CD4-positive, alpha-beta T cell (primary cell): ENCODE measurements at regions of chr5 and their contacts with region 1.

Region 1: GRCh38 chr5:154430466-154430865 is 15.3 kb upstream of the SAP30L start:
- DNase-seq: no peak
- ATAC-seq: no peak
- H3K4me3 ChIP-seq: no peak overlapping the region
- H3K4me3 Mint-ChIP-seq: no peak overlapping the region
- H3K27ac ChIP-seq: no peak overlapping the region
- H3K27ac Mint-ChIP-seq: no peak overlapping the region
- H3K4me1 ChIP-seq: no peaks in the 10 kb centered on the region
- H3K4me1 Mint-ChIP-seq: no peaks in the 10 kb centered on the region
- H3K27me3 ChIP-seq: no peaks in the 10 kb centered on the region
- H3K27me3 Mint-ChIP-seq: no peaks in the 10 kb centered on the region
- CTCF ChIP-seq: no peak

Region 2: DNA sequence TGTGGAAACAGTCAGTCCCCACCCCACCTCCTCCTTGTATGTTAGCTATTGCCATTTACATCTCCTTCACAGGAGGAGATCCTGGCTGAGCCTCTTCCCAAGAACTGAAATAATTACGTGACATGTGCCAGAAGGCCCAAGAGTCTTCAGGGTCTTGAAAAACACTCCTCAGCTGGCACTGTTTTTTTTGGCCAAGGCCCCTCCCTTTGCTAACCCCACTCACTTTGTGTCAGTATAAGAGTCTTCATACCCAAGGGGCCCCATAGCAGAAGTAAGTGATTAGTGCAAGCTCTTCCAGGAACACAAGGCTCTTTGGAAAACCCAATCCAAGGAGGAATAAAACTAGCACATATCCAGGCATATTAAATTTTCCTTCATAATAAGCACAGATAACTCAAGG is 319.0 kb after region 1 on chr5:
- CTCF ChIA-PET with region 1: no interaction called
- POLR2A ChIA-PET with region 1: no interaction called
- intact Hi-C with region 1: loop called in 1 of 2 experiments (anchors 5 kb)
- DNase-seq: no peak
- ATAC-seq: no peak
- H3K4me3 ChIP-seq: no peak overlapping the region
- H3K4me3 Mint-ChIP-seq: no peak overlapping the region
- H3K27ac ChIP-seq: no peak overlapping the region
- H3K27ac Mint-ChIP-seq: no peak overlapping the region
- H3K4me1 ChIP-seq: peaks cover 11% of the 10 kb centered on the region
- H3K4me1 Mint-ChIP-seq: peaks cover 14% of the 10 kb centered on the region
- H3K27me3 ChIP-seq: no peaks in the 10 kb centered on the region
- H3K27me3 Mint-ChIP-seq: no peaks in the 10 kb centered on the region
- CTCF ChIP-seq: no peak